ENCODE measurements at regions of chr10 and their contacts with region 1.

Region 1: DNA sequence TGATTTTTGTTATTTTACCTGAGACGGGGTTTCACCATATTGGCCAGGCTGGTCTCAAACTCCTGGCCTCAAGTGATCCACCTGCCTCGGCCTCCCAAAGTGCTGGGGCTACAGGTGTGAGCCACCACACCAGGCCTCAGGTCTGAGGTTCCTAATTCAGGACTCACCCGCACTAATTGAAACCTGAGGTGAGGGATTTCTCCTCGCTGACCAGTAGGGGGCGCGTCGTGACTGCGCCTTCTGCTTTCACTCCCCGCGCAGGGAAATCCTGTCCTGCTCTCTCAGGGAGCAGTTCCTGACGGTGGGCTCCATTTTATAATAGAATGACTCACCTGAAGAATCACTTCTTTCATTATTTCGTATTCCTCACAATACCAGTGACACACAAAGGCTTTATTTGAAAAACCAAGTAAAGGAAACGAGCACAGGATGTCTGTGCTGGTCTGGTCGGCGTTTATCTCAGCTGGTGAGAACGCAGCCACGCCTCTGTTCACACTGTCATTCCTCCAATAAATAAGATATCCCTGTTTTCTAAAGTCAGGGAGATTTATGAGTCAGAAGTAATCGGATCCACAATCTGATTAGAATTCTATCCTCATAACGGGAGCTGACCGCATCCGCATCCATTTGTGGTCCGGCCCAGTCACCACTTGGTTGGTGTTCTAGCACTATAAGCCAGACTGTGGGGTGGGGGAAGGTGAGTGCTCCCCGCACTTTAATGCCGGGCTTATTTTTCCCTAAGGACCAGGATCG is 35.4 kb downstream of the BAG3 start:
- DNase-seq: peak; percentile 70 to 88
- H3K4me3 ChIP-seq: peak overlapping the region; percentile 50; the same call in 1 of the 2 replicates
- H3K27ac ChIP-seq: peak overlapping the region; percentile 93
- H3K4me1 ChIP-seq: peaks cover 37% of the 10 kb centered on the region
- H3K27me3 ChIP-seq: no peaks in the 10 kb centered on the region
- CTCF ChIP-seq: peak; percentile 88

Region 2: DNA sequence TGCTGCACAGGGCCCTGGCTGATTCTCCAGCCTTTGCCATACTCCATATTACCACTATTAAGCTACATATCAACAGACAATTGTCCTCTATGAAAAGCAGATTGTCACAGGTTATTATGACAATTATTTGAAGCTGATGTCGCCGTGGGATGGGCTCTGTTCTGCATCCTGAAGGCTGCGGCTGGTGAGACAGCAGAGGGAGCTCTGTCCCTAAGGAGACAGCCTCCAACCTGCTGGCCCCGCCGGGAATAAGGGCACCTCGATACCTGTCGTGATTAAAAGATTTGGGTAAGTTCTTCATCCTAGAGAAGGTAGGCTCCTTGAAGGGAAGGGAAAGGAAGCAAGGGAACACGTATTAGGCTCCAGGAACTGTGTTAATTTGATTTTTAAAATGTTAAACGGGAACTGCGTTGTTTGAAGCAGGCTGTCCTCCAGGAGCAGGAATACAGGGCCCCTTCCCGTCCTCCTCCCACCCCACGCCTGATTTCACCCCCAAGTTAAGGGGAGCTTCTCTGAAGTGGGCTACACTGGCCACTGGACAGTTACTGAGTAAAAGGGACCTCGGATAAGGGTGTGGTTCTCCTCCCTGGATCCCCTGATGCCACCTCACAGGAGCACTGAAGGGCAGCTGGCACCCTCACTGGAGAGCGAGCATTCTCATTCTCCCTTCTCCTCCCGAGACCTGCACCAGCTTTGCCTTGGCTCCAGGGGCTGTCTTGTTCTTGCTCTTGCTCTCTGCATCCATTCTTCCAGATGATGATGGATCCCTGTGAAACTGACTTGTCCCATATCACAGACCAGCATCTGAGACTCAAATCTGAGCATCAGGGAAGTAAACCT is 78.1 kb before region 1 on chr10:
- CTCF ChIA-PET with region 1: interaction called, 4 read pairs
- POLR2A ChIA-PET with region 1: no interaction called
- intact Hi-C with region 1: loop called (anchors 1 kb)
- DNase-seq: peak; percentile 41 to 52
- H3K4me3 ChIP-seq: no peak overlapping the region
- H3K27ac ChIP-seq: no peak overlapping the region
- H3K4me1 ChIP-seq: no peaks in the 10 kb centered on the region
- H3K27me3 ChIP-seq: no peaks in the 10 kb centered on the region
- CTCF ChIP-seq: peak; percentile 71

Region 3: GRCh38 chr10:119725828-119726675 is 39.4 kb after region 1 on chr10 and contains the start of gene INPP5F:
- CTCF ChIA-PET with region 1: no interaction called
- POLR2A ChIA-PET with region 1: no interaction called
- intact Hi-C with region 1: loop called (anchors 1 kb)
- DNase-seq: peak; percentile 79 to 97
- H3K4me3 ChIP-seq: peak within 1 kb of the TSS; percentile 70
- H3K27ac ChIP-seq: peak within 1 kb of the TSS; percentile 62
- H3K4me1 ChIP-seq: peaks cover 20% of the 10 kb centered on the region
- H3K27me3 ChIP-seq: no peaks in the 10 kb centered on the region
- CTCF ChIP-seq: no peak
- total RNA-seq, gene INPP5F: 11.4 and 12.4 TPM in 2 replicates

Region 4: GRCh38 chr10:119750391-119751230 is 64.0 kb after region 1 on chr10:
- CTCF ChIA-PET with region 1: interaction called, 3 read pairs
- POLR2A ChIA-PET with region 1: no interaction called
- intact Hi-C with region 1: loop called (anchors 1 kb)
- DNase-seq: peak; percentile 44 to 59
- H3K4me3 ChIP-seq: no peak overlapping the region
- H3K27ac ChIP-seq: no peak overlapping the region
- H3K4me1 ChIP-seq: no peaks in the 10 kb centered on the region
- H3K27me3 ChIP-seq: no peaks in the 10 kb centered on the region
- CTCF ChIP-seq: peak; percentile 79

Region 5: GRCh38 chr10:119859420-119860258 is 173.0 kb after region 1 on chr10:
- CTCF ChIA-PET with region 1: interaction called, 15 read pairs
- POLR2A ChIA-PET with region 1: no interaction called
- intact Hi-C with region 1: loop called (anchors 2 kb)
- DNase-seq: no peak
- H3K4me3 ChIP-seq: no peak overlapping the region
- H3K27ac ChIP-seq: peak overlapping the region; percentile 19; the same call in 1 of the 2 replicates
- H3K4me1 ChIP-seq: no peaks in the 10 kb centered on the region
- H3K27me3 ChIP-seq: no peaks in the 10 kb centered on the region
- CTCF ChIP-seq: peak; percentile 76

Measured in PC-9 (cell line).